MCF 10A (cell line): ENCODE measurements at regions of chr13 and their contacts with region 1.

Region 1: DNA sequence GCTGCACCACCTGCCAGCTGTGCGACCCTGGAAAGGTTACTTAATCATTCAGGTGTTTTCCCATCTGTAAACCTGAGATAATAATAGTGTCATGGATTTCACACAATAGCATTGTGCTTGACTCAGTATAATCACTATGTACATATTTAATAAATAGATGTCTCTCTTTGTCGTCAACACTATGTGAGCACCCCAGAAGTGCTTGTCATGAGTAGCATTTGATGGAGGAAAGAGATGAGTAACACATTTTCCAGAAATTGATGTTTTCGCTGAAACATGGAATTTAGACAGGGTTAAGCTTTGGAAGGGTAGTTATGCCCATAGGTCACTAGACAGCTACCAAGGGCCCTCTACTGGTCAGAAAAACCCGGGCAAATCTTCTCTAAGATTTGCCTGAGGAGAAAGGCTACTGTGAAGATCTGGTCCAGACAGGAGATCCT is 9.5 kb upstream of the MBNL2 start:
- DNase-seq: peak; percentile 75
- H3K4me3 Mint-ChIP-seq: no peak overlapping the region
- H3K27ac Mint-ChIP-seq: no peak overlapping the region
- H3K4me1 Mint-ChIP-seq: no peaks in the 10 kb centered on the region
- H3K27me3 Mint-ChIP-seq: no peaks in the 10 kb centered on the region
- CTCF ChIP-seq: peak; percentile 69

Region 2: DNA sequence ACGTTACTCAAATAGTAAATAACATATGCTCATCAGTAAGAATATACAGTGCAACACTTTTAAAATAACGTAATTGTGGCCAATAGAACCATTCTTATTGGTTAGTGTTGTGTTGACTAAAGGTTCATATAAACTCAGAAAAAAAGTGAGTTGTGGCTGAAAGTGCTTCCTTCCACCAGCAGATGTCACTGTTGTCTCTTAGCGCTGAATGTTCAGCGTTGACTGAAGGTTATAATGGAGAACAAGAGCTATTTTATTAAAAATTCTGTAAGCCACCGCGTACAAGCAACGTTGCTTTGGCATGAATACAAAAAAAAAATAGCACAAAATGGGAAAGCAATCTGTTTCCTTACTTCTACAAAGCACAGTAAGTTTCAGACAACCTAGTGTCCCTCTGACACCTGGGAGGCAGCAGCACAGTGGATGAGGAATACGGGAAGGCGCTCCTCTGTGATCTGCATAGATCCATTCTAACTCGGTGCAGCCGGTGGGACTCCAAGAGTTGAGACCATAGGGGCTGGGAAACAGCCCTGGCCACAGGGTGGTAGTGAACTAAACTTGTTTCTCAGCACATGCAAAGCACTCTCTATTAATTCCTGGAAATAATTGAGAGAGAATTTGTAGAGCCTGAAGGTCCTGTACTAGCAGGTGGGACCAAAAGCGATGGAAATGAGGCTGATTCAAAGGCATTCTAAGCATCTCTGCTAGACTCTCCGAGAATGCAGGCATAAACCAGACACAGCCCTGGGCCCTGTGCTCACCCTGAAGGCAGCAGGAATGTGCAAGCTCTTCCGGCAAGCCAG is 194.4 kb before region 1 on chr13:
- CTCF ChIA-PET with region 1: interaction called, 11 read pairs
- POLR2A ChIA-PET with region 1: interaction called, 3 read pairs
- intact Hi-C with region 1: loop called (anchors 2 kb)
- DNase-seq: peak; percentile 80
- H3K4me3 Mint-ChIP-seq: peak overlapping the region; percentile 11
- H3K27ac Mint-ChIP-seq: no peak overlapping the region
- H3K4me1 Mint-ChIP-seq: no peaks in the 10 kb centered on the region
- H3K27me3 Mint-ChIP-seq: peaks cover 27% of the 10 kb centered on the region
- CTCF ChIP-seq: peak; percentile 89

Region 3: DNA sequence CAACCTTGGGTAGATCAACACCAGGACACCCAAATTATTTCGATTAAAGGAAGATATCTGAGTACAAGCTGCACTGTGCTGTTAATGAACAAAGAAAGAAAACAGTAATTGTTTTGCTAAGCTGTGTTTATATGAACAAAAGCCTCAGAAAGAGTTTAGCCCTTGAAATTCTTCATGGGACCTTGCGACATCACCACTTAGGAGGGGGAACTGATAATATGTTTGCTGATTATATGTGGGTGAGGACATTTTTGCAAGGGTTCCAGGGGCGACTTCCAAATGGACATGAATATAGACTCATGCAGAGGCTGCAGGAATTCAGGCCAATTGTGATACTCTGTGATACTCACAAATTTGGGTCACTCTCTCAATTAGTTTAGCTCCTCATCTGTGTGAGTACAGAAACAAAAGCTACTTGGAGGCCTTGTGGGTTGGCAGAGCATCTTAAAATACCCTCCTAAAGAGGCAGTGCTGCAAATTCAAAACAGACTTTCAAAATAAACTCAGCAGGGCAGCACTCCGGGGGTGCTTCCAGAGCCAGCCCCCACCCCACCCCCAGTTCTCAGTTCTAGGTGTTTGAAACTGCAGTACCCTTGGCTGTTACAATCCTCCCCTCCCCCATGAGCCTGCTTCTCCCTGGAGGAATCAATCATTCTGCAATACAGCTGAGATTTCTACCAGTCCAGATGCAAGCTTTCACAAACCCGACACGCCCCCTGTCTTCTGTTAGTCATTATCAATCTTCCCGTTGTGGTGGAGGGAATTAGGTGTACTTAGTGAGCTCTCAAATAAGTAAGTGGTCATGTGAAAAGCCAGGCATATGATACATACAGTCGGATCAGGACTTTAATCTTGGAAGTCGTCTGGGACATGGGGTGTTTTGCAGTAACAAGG is 87.5 kb before region 1 on chr13:
- CTCF ChIA-PET with region 1: interaction called, 16 read pairs
- POLR2A ChIA-PET with region 1: interaction called, 9 read pairs
- intact Hi-C with region 1: no loop called
- DNase-seq: peak; percentile 89
- H3K4me3 Mint-ChIP-seq: peak overlapping the region; percentile 28
- H3K27ac Mint-ChIP-seq: peak overlapping the region; percentile 21
- H3K4me1 Mint-ChIP-seq: peaks cover 47% of the 10 kb centered on the region
- H3K27me3 Mint-ChIP-seq: no peaks in the 10 kb centered on the region
- CTCF ChIP-seq: no peak

Region 4: GRCh38 chr13:97198753-97199152 is 13.9 kb before region 1 on chr13:
- CTCF ChIA-PET with region 1: interaction called, 13 read pairs
- POLR2A ChIA-PET with region 1: interaction called, 3 read pairs
- intact Hi-C with region 1: no loop called
- DNase-seq: no peak
- H3K4me3 Mint-ChIP-seq: no peak overlapping the region
- H3K27ac Mint-ChIP-seq: no peak overlapping the region
- H3K4me1 Mint-ChIP-seq: no peaks in the 10 kb centered on the region
- H3K27me3 Mint-ChIP-seq: no peaks in the 10 kb centered on the region
- CTCF ChIP-seq: no peak

Region 5: GRCh38 chr13:97344265-97345175 is 131.9 kb after region 1 on chr13:
- CTCF ChIA-PET with region 1: interaction called, 40 read pairs
- POLR2A ChIA-PET with region 1: interaction called, 4 read pairs
- intact Hi-C with region 1: loop called (anchors 1 kb)
- DNase-seq: peak; percentile 83
- H3K4me3 Mint-ChIP-seq: no peak overlapping the region
- H3K27ac Mint-ChIP-seq: no peak overlapping the region
- H3K4me1 Mint-ChIP-seq: no peaks in the 10 kb centered on the region
- H3K27me3 Mint-ChIP-seq: no peaks in the 10 kb centered on the region
- CTCF ChIP-seq: peak; percentile 85

Region 6: GRCh38 chr13:97367016-97367822 is 154.6 kb after region 1 on chr13:
- CTCF ChIA-PET with region 1: interaction called, 12 read pairs
- POLR2A ChIA-PET with region 1: interaction called, 3 read pairs
- intact Hi-C with region 1: no loop called
- DNase-seq: peak; percentile 18
- H3K4me3 Mint-ChIP-seq: no peak overlapping the region
- H3K27ac Mint-ChIP-seq: peak overlapping the region; percentile 62
- H3K4me1 Mint-ChIP-seq: peaks cover 6% of the 10 kb centered on the region
- H3K27me3 Mint-ChIP-seq: no peaks in the 10 kb centered on the region
- CTCF ChIP-seq: no peak

Region 7: GRCh38 chr13:97583907-97584497 is 371.4 kb after region 1 on chr13:
- CTCF ChIA-PET with region 1: no interaction called
- POLR2A ChIA-PET with region 1: no interaction called
- intact Hi-C with region 1: no loop called
- DNase-seq: no peak
- H3K4me3 Mint-ChIP-seq: no peak overlapping the region
- H3K27ac Mint-ChIP-seq: no peak overlapping the region
- H3K4me1 Mint-ChIP-seq: no peaks in the 10 kb centered on the region
- H3K27me3 Mint-ChIP-seq: no peaks in the 10 kb centered on the region
- CTCF ChIP-seq: no peak